ENCODE measurements at regions of chr14 and their contacts with region 1.

Region 1: GRCh38 chr14:72516936-72517700 is 376.8 kb downstream of the DPF3 start:
- DNase-seq: peak; percentile 73
- H3K4me3 Mint-ChIP-seq: no peak overlapping the region
- H3K27ac Mint-ChIP-seq: no peak overlapping the region
- H3K4me1 Mint-ChIP-seq: peaks cover 87% of the 10 kb centered on the region
- H3K27me3 Mint-ChIP-seq: peaks cover 2% of the 10 kb centered on the region

Region 2: DNA sequence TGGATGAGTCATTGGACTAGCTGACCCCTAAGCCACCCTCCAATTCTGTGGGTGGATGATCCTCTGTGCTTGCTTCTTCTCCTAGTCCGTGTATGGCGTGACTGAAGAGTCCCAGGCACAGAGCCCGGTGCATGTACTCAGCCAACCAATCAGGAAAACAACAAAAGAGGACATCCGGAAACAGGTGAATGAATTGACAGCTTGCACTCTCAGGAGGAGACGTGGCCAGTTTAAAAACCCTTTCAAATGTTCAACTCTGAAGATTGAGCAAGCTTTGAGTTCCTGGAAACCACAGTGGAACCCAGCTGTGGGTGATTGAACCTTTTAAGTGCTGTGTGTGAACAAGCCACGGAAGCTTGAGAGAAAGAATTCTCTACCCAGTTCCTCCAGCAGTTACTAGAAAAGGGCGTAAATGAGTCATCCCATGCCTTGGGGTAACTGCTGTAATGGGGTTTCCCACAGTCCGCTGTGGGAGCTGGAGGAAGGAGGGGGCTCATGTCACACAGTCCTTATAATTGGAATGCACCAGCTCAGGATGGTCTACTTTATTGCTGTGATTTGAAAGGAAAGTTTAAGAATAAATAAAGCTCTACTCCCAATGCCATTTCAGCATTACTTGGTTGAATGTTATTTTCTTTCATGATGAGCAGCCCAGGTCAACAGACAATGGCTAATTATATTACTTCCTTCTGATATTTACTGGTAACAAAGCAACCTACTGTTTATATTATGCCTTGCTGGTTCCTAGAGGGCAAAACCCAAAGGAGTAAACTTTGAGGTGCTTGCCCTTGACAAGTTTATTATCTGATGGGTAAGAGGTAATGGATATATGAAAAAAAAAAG is 40.2 kb before region 1 on chr14:
- intact Hi-C with region 1: loop called (anchors 1 kb)
- DNase-seq: peak; percentile 81
- H3K4me3 Mint-ChIP-seq: peak overlapping the region; percentile 53
- H3K27ac Mint-ChIP-seq: peak overlapping the region; percentile 87
- H3K4me1 Mint-ChIP-seq: peaks cover 80% of the 10 kb centered on the region
- H3K27me3 Mint-ChIP-seq: no peaks in the 10 kb centered on the region

Region 3: DNA sequence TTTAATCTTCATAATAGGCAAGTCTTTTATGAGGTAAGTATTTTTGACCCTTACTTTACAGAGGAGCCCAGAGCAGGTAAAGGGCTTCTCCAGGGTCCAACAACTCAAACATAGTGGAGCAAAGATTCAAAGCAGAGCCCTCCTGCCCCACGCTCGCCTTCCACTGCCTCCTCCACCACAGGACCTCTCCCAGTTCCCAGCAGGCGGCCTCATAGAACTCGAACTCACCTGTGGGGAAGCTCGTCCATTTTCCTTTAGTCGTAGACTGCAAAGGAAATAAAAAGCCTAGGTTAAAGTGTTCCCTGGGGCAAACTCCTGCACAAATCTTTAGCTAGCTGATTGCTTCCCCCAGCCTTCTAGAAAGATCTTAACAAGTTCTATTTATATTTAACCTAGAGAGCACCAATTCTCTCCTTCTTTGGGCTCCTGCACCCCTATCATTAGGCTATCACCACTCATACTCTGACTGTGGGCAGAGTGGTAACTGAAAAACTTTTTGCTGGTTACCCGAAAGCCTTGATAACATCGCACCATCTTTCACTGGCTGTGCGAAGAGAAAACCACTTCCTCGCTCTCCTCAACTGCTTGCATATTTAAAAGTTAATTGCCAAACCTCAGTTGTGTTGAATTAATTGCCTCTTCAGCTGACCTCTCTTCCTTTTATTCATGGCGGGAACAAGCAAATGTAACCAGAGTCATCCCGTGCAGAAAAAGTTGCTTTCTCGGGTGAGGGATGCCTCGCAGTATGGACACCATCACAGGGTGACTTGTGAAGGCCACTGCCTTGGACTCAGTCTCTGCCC is 77.2 kb after region 1 on chr14:
- intact Hi-C with region 1: loop called (anchors 1 kb)
- DNase-seq: peak; percentile 63
- H3K4me3 Mint-ChIP-seq: peak overlapping the region; percentile 47
- H3K27ac Mint-ChIP-seq: peak overlapping the region; percentile 61
- H3K4me1 Mint-ChIP-seq: peaks cover 66% of the 10 kb centered on the region
- H3K27me3 Mint-ChIP-seq: peaks cover 4% of the 10 kb centered on the region

Region 4: GRCh38 chr14:72810201-72810600 is 293.1 kb after region 1 on chr14:
- intact Hi-C with region 1: loop called (anchors 1 kb)
- DNase-seq: peak; percentile 57
- H3K4me3 Mint-ChIP-seq: peak overlapping the region; percentile 48
- H3K27ac Mint-ChIP-seq: peak overlapping the region; percentile 92
- H3K4me1 Mint-ChIP-seq: peaks cover 31% of the 10 kb centered on the region
- H3K27me3 Mint-ChIP-seq: peaks cover 3% of the 10 kb centered on the region

Region 5: DNA sequence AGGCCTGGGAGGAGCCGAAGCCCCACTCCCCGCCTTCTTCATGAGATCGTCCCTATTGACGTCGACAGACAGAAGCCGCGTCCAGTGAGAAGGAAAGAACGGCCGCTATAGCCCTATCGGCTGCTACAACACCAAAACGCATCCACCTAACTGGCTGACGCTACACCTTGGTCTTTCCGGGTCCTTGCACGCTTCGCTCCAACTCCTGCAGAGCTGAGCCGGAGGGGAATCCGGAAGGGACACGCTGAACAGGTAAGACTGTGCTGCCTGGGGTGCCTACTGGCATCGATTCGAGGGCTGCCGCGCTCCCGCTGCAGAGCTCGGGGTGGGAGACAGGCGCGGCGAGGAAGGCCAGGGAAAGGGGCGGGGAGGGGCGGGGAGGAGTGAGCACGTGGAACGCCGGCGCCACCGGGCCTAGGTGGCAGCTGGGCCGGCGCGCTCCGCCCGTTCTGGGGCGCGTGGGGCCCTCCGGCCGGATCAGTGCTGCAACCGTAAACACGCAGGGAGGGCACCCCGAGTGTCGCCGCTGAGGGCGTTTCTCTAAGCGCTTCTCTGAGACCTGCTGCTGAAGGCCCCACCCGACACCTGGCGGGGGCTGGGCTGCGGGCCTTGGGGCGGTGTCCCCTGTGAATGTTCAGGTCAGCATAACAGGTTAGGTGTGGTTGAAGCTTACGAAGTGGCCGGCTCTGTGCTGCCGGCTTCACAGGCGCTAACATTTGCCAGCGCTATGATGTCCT is 409.3 kb after region 1 on chr14 and contains the start of gene DCAF4:
- intact Hi-C with region 1: loop called (anchors 1 kb)
- DNase-seq: peak; percentile 94
- H3K4me3 Mint-ChIP-seq: peak within 1 kb of the TSS; percentile 90
- H3K27ac Mint-ChIP-seq: peak within 1 kb of the TSS; percentile 95
- H3K4me1 Mint-ChIP-seq: peaks cover 8% of the 10 kb centered on the region
- H3K27me3 Mint-ChIP-seq: peaks cover 16% of the 10 kb centered on the region
- total RNA-seq, gene DCAF4: 17.1 and 20.4 TPM in 2 replicates

Region 6: GRCh38 chr14:73463411-73463810 is 946.3 kb after region 1 on chr14:
- intact Hi-C with region 1: loop called (anchors 5 kb)
- DNase-seq: peak; percentile 43
- H3K4me3 Mint-ChIP-seq: peak overlapping the region; percentile 57
- H3K27ac Mint-ChIP-seq: peak overlapping the region; percentile 91
- H3K4me1 Mint-ChIP-seq: peaks cover 78% of the 10 kb centered on the region
- H3K27me3 Mint-ChIP-seq: no peaks in the 10 kb centered on the region

Measured in activated T-helper 1 cell treated with anti-CD3 and anti-CD28 coated beads, Interleukin-12 subunit alpha, Interleukin-12 subunit beta, Interleukin-2, Interleukin-4 antibody, amounts not matched to agents 30 ng/mL and 10 ng/mL and 1 ng/mL, durations not matched to agents 14 hours and 24 hours and 36 hours (primary cell).